GM10248 (cell line): ENCODE measurements at regions of chr19 and their contacts with region 1.

Region 1: GRCh38 chr19:2840794-2841790 is at the start of gene ZNF555:
- DNase-seq: peak; percentile 99
- CTCF ChIP-seq: peak; percentile 52

Region 2: DNA sequence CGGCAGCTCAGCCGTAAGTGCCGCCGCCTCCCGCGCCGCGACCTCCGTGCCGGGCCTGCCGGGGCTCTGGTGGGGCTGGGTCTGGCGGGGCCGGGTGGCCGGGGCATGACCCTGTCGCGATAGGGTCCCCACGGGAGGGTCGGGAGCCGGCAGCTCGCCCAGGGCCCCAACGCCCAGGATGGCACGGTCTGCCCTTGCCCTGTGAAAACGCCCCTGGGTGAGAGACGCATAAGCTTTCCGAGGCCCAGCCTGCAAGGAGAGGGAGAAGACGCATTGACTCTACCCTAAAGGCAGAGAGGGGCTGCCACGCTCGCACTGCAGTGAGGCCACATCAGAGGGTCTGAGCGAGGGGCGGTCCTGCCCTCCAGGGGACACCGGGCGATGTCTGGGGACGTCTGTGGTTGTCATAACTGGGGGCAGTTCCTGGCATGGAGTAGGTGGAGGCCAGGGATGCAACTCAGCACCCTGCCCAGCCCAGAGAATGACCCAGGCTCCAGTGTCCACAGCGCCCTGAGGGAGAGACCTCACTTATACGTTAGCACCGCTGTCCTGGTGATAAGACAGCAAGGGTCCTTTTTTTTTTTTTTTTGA is 20.9 kb before region 1 on chr19:
- CTCF ChIA-PET with region 1: interaction called, 11 read pairs
- POLR2A ChIA-PET with region 1: no interaction called
- DNase-seq: no peak
- CTCF ChIP-seq: no peak

Region 3: DNA sequence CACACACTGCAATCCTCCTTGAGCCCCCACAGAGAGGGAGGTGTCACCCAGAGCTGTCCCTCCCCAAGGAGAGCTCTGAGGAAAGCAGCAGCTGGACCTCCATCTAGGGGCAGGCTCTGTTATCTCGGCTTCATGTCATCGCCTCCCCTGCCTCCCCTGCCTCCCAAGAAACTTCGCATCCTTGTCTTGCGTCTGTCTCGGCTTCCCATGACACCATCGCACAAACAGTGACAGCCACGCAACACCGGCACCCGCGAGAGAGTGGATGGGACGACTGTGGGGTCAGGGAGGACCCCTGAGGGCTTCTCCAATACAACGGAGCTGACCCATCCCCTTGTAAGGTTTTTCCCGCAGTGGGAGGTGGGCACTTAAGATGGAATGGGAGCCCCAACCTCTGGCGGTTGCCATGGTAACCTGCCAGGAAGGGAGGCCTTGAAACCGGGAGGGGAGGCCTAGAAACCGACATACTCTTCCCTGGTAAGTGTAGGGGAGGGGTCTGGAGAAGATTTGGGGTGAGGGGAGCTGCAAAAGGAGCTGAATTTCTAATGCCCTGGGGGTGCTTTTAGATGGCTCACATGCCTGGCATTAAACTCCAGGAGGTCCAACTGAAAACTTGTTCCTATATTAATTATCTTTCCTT is 171.6 kb after region 1 on chr19:
- CTCF ChIA-PET with region 1: no interaction called
- POLR2A ChIA-PET with region 1: no interaction called
- DNase-seq: no peak
- CTCF ChIP-seq: no peak